OCI-LY7 (cell line): ENCODE measurements at regions of chr20 and their contacts with region 1.

Region 1: DNA sequence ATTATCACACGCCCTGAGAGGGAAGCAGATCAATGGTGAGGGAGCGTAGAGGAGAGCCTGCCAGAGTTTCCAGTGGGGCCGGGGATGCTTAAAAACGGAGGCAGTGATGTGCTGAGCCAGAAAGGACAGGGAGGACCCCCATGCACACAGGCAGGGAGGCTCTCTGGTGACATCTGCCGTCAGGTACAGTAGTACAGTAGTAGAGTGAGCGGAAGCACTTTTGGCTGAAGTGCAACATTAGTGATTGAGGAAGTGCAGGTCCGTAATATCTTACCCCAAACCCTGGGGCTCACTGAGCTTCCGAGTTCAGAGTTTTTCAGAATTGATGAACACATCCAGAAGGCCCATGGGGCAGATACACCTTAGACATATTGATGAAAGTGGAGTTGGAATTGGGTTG is 42.1 kb downstream of the GFRA4 start:
- DNase-seq: peak; percentile 12
- H3K4me3 ChIP-seq: no peak overlapping the region
- H3K27ac ChIP-seq: no peak overlapping the region
- H3K4me1 ChIP-seq: no peaks in the 10 kb centered on the region
- CTCF ChIP-seq: peak; percentile 64

Region 2: DNA sequence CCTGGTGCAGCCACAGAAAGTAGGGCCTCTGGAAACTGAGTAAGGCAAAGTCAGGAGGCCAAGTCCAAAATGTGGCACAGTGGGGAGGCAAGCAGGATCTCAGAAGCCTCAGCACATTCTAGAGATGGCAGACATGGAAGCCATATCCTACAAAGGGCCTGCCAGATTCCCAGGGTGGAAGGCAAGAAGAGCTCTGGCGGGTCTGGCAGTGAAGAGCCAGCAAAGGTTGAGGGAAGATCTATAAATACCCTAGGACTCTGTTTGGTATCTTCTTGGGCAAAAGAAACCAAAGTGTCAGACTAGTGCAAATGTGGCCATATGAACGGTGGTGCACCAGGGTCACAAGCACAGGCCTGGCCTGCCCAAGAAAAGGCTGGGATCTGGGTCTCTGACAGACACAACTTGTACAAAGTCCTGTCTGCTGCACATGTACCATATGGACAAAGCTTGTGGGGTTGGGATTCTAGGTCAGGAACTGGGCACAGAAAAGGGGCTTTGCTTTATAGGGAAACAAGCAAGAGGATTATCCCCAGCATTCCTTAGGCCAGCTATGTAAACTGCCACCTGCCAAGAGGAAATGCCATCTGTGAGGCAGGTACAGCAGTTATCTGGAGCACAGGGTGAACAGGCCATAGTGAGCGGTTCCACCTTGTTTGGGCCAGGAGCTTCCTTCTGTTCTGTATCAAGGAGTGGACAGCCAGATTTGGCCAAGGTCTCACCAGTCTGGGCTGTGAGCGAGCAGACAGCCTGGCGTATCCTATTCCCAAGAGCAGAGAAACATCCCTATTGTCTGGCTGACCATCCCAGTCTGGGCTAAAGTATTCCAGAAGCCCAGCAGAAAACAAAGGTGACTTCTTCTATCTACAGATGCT is 345.8 kb before region 1 on chr20:
- CTCF ChIA-PET with region 1: no interaction called
- POLR2A ChIA-PET with region 1: interaction called, 10 read pairs
- intact Hi-C with region 1: no loop called
- DNase-seq: no peak
- H3K4me3 ChIP-seq: no peak overlapping the region
- H3K27ac ChIP-seq: no peak overlapping the region
- H3K4me1 ChIP-seq: no peaks in the 10 kb centered on the region
- CTCF ChIP-seq: no peak

Region 3: GRCh38 chr20:3551681-3552434 is 69.3 kb before region 1 on chr20:
- CTCF ChIA-PET with region 1: no interaction called
- POLR2A ChIA-PET with region 1: no interaction called
- intact Hi-C with region 1: no loop called
- DNase-seq: no peak
- H3K4me3 ChIP-seq: no peak overlapping the region
- H3K27ac ChIP-seq: no peak overlapping the region
- H3K4me1 ChIP-seq: no peaks in the 10 kb centered on the region
- CTCF ChIP-seq: no peak

Region 4: GRCh38 chr20:3563548-3564177 is 57.4 kb before region 1 on chr20:
- CTCF ChIA-PET with region 1: interaction called, 3 read pairs
- POLR2A ChIA-PET with region 1: no interaction called
- intact Hi-C with region 1: loop called (anchors 1 kb)
- DNase-seq: peak; percentile 65
- H3K4me3 ChIP-seq: no peak overlapping the region
- H3K27ac ChIP-seq: no peak overlapping the region
- H3K4me1 ChIP-seq: peaks cover 11% of the 10 kb centered on the region
- CTCF ChIP-seq: peak; percentile 95

Region 5: GRCh38 chr20:3670511-3670910 is 49.4 kb after region 1 on chr20:
- CTCF ChIA-PET with region 1: no interaction called
- POLR2A ChIA-PET with region 1: no interaction called
- intact Hi-C with region 1: no loop called
- DNase-seq: no peak
- H3K4me3 ChIP-seq: no peak overlapping the region
- H3K27ac ChIP-seq: no peak overlapping the region
- H3K4me1 ChIP-seq: no peaks in the 10 kb centered on the region
- CTCF ChIP-seq: no peak